T-cell (primary cell): ENCODE measurements at regions of chr13 and their contacts with region 1.

Region 1: GRCh38 chr13:52421216-52421615 is 15.2 kb upstream of the THSD1 start:
- DNase-seq: no peak
- ATAC-seq: no peak
- H3K4me3 ChIP-seq: no peak overlapping the region
- H3K4me3 Mint-ChIP-seq: no peak overlapping the region
- H3K27ac ChIP-seq: no peak overlapping the region
- H3K27ac Mint-ChIP-seq: no peak overlapping the region
- H3K4me1 ChIP-seq: no peaks in the 10 kb centered on the region
- H3K4me1 Mint-ChIP-seq: peaks cover 0 to 5% (median 0%) of the 10 kb centered on the region in 3 donors
- H3K27me3 ChIP-seq: no peaks in the 10 kb centered on the region
- H3K27me3 Mint-ChIP-seq: no peaks in the 10 kb centered on the region

Region 2: DNA sequence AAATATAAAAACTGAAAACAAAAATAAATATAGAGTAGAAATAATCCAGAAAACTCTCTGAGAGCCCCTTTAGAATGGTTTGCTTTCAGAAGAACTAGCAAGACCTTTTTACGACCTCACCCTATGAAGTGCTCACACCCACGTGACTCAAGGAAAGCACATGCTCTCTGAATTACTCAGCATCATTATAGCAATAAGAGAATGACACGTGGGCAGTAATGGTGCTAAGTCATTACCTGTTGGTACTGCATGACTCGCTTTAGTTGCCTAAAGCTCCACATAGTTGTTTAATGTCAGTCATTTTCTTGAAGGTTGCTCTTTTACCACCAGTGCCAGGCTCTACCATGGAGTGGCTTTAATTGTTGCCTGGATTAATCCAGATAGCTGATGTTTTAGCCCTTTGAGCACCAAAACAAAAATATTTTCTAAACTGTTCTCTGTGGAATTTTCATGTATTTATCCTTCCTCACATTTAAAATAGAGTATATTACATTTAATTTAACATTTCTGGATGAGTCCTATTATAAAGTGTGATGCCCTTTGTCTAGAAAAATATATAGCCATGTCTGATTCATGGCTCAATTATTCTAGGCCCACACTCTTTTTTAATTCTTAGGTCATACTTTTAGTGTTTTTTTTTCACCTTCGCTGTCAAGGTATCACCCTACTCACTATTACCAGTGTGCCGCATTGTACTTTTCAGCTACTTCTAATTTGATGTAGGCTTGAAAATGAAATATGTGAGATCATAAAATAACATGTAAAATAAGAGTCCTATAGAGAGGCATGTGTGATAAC is 72.0 kb before region 1 on chr13:
- CTCF ChIA-PET with region 1: no interaction called
- POLR2A ChIA-PET with region 1: no interaction called
- DNase-seq: no peak
- ATAC-seq: no peak
- H3K4me3 ChIP-seq: no peak overlapping the region
- H3K4me3 Mint-ChIP-seq: no peak overlapping the region
- H3K27ac ChIP-seq: no peak overlapping the region
- H3K27ac Mint-ChIP-seq: no peak overlapping the region
- H3K4me1 ChIP-seq: no peaks in the 10 kb centered on the region
- H3K4me1 Mint-ChIP-seq: no peaks in the 10 kb centered on the region
- H3K27me3 ChIP-seq: peaks cover 0 to 3% of the 10 kb centered on the region in 2 experiments
- H3K27me3 Mint-ChIP-seq: peaks cover 10 to 29% of the 10 kb centered on the region in 2 donors

Region 3: GRCh38 chr13:52454820-52455676 is 33.8 kb after region 1 on chr13 and contains the start of gene CKAP2:
- CTCF ChIA-PET with region 1: interaction called, 3 read pairs
- POLR2A ChIA-PET with region 1: interaction called in 1 of 2 experiments, 13 read pairs
- DNase-seq: peak; percentile 86 to 96 (median 92)
- ATAC-seq: peak; percentile 84 to 89 (median 88)
- H3K4me3 ChIP-seq: peak within 1 kb of the TSS; percentile 84 to 89
- H3K4me3 Mint-ChIP-seq: peak within 1 kb of the TSS; percentile 95
- H3K27ac ChIP-seq: peak within 1 kb of the TSS; percentile 92
- H3K27ac Mint-ChIP-seq: peak within 1 kb of the TSS; percentile 99 to 100
- H3K4me1 ChIP-seq: peaks cover 14% of the 10 kb centered on the region in 2 experiments
- H3K4me1 Mint-ChIP-seq: peaks cover 33 to 41% (median 38%) of the 10 kb centered on the region in 3 donors
- H3K27me3 ChIP-seq: no peaks in the 10 kb centered on the region
- H3K27me3 Mint-ChIP-seq: no peaks in the 10 kb centered on the region
- total RNA-seq, gene CKAP2: 9.0 to 38.7 (median 12.0) TPM

Region 4: DNA sequence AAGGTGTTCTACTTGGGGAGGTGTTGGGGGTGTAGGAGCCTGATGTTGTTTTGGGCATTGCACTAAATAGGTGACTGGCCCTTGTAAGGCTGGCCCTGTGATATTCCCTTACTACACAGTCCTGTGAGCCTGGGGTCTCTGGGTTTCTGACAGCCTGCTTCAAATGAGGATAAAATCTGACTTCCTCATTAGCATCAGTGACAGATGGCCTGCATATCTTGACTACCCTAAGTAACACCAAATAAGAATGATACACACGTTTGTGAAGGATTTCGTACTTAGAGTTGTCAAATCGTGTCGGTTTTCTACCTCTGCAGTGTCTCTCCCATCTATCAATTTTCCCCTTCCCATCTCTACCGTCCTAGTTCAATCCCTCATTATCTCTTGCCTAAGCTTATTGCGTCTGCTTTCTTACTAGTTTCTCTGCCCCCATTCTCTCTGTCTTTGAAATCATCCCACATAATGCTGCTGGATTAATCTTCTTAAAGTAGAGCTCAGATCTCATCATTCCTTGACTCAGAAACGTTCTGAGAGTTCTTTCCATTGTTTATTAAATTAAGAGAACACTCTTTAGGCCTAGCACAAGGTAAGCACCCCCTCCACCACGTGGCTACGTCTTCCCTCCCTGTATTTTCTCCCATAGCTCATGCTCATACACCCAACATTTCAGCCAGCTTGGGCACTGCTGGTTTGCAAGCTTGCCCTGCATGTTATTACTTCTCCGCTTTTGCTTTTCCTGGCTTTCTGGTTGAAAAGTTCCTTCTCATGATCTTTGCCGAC is 344.6 kb after region 1 on chr13:
- CTCF ChIA-PET with region 1: no interaction called
- POLR2A ChIA-PET with region 1: no interaction called
- DNase-seq: no peak
- ATAC-seq: no peak
- H3K4me3 ChIP-seq: no peak overlapping the region
- H3K4me3 Mint-ChIP-seq: no peak overlapping the region
- H3K27ac ChIP-seq: no peak overlapping the region
- H3K27ac Mint-ChIP-seq: no peak overlapping the region
- H3K4me1 ChIP-seq: no peaks in the 10 kb centered on the region
- H3K4me1 Mint-ChIP-seq: no peaks in the 10 kb centered on the region
- H3K27me3 ChIP-seq: peaks cover 0 to 9% of the 10 kb centered on the region in 2 experiments
- H3K27me3 Mint-ChIP-seq: peaks cover 5 to 7% of the 10 kb centered on the region in 2 donors

Region 5: DNA sequence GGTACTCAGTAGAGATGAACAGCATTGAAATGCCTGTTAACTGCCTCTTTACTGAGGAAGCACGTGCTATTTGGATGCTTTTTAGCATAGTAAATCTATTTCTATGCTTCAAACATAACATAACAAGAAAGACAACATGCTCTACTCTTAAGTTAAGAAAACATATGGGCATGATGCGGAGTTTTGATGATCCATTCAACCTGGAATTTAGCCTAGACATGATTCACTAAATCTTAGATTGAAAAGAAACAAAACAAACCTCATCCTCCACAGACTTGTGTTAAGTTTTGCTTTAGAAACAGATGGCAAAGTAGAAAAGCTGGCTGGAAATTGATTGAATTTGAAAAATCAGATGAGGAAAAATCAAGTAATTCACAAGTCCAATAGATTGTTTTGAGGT is 1201.2 kb after region 1 on chr13:
- CTCF ChIA-PET with region 1: no interaction called
- POLR2A ChIA-PET with region 1: no interaction called
- DNase-seq: no peak
- ATAC-seq: no peak
- H3K4me3 ChIP-seq: no peak overlapping the region
- H3K4me3 Mint-ChIP-seq: no peak overlapping the region
- H3K27ac ChIP-seq: no peak overlapping the region
- H3K27ac Mint-ChIP-seq: no peak overlapping the region
- H3K4me1 ChIP-seq: no peaks in the 10 kb centered on the region
- H3K4me1 Mint-ChIP-seq: no peaks in the 10 kb centered on the region
- H3K27me3 ChIP-seq: no peaks in the 10 kb centered on the region
- H3K27me3 Mint-ChIP-seq: no peaks in the 10 kb centered on the region